ENCODE measurements at regions of chr14 and their contacts with region 1.

Region 1: GRCh38 chr14:102086972-102087761 is at the start of gene HSP90AA1:
- DNase-seq: peak; percentile 95
- ATAC-seq: peak; percentile 83 to 95 (median 91)
- H3K4me3 ChIP-seq: peak within 1 kb of the TSS; percentile 72 to 99 (median 86)
- H3K27ac ChIP-seq: peak within 1 kb of the TSS; percentile 99 to 100 (median 100)
- H3K4me1 ChIP-seq: peaks cover 5 to 55% (median 50%) of the 10 kb centered on the region in 9 donors
- H3K27me3 ChIP-seq: no peaks in the 10 kb centered on the region
- CTCF ChIP-seq: peak in 6 of 9 donors; percentile 12 to 49 (median 34)
- total RNA-seq, gene HSP90AA1: 315 to 501 (median 402) TPM

Region 2: GRCh38 chr14:101972268-101972774 is 114.8 kb before region 1 on chr14:
- intact Hi-C with region 1: loop called in 1 of 10 experiments (anchors 5 kb)
- DNase-seq: peak; percentile 55 to 89
- ATAC-seq: peak; percentile 93 to 99 (median 98)
- H3K4me3 ChIP-seq: peak overlapping the region in 5 of 10 donors; percentile 0 to 10 (median 9)
- H3K27ac ChIP-seq: peak overlapping the region; percentile 3 to 86 (median 73)
- H3K4me1 ChIP-seq: peaks cover 9 to 79% (median 63%) of the 10 kb centered on the region in 9 donors
- H3K27me3 ChIP-seq: no peaks in the 10 kb centered on the region
- CTCF ChIP-seq: no peak

Measured in heart right ventricle (tissue), 16 donors.